HepG2 (cell line): ENCODE measurements at regions of chr18 and their contacts with region 1.

Region 1: DNA sequence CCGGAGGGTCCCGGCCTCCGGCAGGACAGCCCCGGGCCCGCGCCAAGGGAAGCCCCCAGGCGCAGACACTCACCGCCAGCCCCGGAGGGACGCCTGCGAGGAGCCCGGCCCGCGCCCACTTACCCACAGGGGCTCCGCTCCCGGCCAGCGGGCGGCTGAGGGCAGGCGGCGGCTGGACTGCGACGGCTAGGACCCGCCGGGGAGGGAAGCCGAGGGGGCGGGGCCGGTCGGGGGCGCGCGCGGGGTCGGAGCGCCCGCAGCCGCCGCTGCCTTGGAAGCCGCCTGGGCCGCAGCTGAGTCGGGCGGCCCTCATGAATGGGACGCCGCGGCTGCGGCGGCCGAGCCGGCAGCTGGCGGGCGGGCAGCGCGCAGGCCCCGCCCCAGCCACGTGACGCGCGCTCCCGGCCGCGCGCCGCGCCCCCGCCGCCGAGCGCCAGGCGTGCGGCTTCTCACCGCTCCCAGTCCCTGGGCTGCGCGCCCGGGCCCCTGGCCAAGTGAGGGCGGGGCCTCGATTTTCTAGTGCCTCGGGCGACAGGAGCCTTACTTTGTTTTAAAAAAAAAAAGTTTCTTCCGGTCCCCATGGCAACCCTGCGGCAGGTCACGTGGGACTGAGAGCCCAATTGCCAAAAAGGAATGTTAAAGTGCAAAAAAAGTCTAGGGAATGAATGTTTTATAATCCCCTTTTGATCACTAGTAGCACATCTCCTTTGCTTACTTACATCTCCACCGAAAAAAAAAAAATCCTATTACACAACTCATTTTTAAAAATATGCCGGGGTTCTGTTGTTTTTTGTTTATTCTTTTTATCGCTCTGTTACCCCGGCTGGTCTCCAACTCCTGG is at the start of gene LPIN2:
- DNase-seq: peak; percentile 95
- ATAC-seq: peak; percentile 83
- H3K4me3 ChIP-seq: peak within 1 kb of the TSS; percentile 80 to 85 (median 84)
- H3K27ac ChIP-seq: peak within 1 kb of the TSS; percentile 94
- H3K4me1 ChIP-seq: peaks cover 76% of the 10 kb centered on the region
- H3K27me3 ChIP-seq: no peaks in the 10 kb centered on the region; a peak in 1 of 5 replicates
- CTCF ChIP-seq: no peak
- EP300 ChIP-seq: peak in 1 of 2 experiments; percentile 20; a peak in 1 of 4 replicates
- POLR2A ChIP-seq: peak; percentile 55 to 66
- RAD21 ChIP-seq: peak; percentile 72
- total RNA-seq, gene LPIN2: 46.0 and 59.5 TPM in 2 replicates

Region 2: DNA sequence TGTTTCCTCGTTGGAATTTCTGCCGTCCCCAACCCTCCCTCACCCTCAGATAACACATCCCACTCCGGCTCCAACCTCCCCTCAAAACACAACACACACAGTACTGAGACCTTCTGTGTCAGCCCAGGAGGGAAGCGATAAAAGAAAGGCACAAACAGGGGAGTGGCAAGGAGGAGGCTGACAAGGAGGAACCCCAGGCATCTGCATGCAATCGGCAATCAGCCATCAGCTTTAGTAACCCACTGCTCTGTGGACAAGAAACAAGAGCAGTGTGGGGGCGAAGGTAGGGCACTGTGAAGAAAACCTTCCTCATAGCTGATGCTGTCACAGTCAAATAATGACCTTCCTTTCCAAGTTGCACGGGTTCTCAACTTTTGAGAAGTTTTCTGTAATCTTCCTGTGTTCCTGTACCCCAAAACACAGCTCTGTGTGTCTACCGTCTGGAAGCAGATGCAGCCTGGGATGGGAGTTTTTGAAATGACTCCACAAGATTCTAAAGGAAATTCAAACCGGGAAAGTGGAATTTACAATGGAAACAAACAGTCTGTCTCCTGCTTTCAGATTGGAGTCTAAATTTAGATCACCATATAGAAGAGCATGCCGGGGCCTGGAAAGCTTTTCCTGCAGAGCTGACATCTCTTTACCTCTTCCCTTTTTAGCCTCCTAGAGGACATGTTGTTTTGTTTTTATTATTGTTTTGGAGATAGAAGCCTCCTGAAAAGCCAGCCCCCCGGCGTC is 16.2 kb after region 1 on chr18:
- CTCF ChIA-PET with region 1: no interaction called
- POLR2A ChIA-PET with region 1: interaction called, 26 read pairs
- in situ Hi-C with region 1: no loop called
- intact Hi-C with region 1: loop called (anchors 1 kb)
- DNase-seq: no peak
- ATAC-seq: no peak
- H3K4me3 ChIP-seq: peak overlapping the region in 1 of 3 experiments; percentile 18; a peak in 1 of 6 replicates
- H3K27ac ChIP-seq: peak overlapping the region; percentile 49
- H3K4me1 ChIP-seq: peaks cover 64% of the 10 kb centered on the region
- H3K27me3 ChIP-seq: no peaks in the 10 kb centered on the region
- CTCF ChIP-seq: no peak
- EP300 ChIP-seq: no peak
- POLR2A ChIP-seq: no peak
- RAD21 ChIP-seq: no peak

Region 3: DNA sequence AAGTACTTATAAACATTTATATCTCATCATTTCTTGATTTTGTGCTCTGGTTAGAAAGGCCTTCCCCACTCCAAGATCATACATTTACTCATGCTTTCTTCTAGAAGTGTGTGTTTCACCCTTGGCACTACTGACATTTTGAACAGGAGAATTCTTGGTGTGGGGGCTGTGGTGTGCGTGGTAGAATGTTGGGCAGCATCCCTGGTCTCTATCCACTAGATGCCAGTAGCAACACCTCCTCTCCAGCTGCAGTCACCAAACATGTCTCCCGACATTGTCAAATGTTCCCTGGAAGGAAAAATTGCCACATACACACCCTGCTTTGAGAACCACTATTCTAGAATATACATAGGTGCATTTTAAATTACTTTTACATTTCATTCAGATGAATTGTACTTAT is 428.1 kb after region 1 on chr18:
- CTCF ChIA-PET with region 1: no interaction called
- POLR2A ChIA-PET with region 1: no interaction called
- in situ Hi-C with region 1: no loop called
- intact Hi-C with region 1: no loop called
- DNase-seq: peak; percentile 41
- ATAC-seq: peak; percentile 90
- H3K4me3 ChIP-seq: no peak overlapping the region
- H3K27ac ChIP-seq: no peak overlapping the region
- H3K4me1 ChIP-seq: peaks cover 15% of the 10 kb centered on the region
- H3K27me3 ChIP-seq: no peaks in the 10 kb centered on the region; a peak in 2 of 5 replicates
- CTCF ChIP-seq: peak; percentile 59
- EP300 ChIP-seq: no peak
- POLR2A ChIP-seq: no peak
- RAD21 ChIP-seq: no peak